ENCODE measurements at regions of chr20 and their contacts with region 1.

Region 1: GRCh38 chr20:49676581-49677291 is 36.9 kb downstream of the B4GALT5 start:
- DNase-seq: peak; percentile 51
- ATAC-seq: peak; percentile 66
- H3K4me3 Mint-ChIP-seq: no peak overlapping the region
- H3K27ac Mint-ChIP-seq: peak overlapping the region; percentile 27
- H3K4me1 Mint-ChIP-seq: peaks cover 59% of the 10 kb centered on the region
- H3K27me3 Mint-ChIP-seq: no peaks in the 10 kb centered on the region

Region 2: DNA sequence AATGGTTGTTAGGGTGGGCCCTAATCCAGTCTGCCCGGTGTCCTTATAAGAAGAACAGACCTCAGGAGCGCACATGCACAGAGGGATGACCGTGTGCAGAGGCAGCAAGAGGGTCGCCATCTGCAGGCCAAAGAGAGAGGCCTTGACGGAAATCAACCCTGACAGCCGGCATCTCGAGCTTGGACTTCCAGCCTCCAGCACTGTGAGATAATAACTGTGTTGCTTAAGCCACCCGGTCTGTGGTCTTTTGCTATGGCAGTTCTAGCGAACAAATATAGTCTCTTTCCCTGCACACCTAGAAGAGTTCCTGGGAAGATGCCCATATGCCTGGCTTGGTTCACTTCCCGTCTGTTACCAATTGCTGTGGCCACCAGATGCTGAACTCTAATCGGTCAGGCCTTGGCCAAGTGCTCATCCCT is 73.5 kb before region 1 on chr20:
- CTCF ChIA-PET with region 1: no interaction called
- POLR2A ChIA-PET with region 1: no interaction called
- intact Hi-C with region 1: no loop called
- DNase-seq: peak; percentile 37
- ATAC-seq: no peak
- H3K4me3 Mint-ChIP-seq: no peak overlapping the region
- H3K27ac Mint-ChIP-seq: no peak overlapping the region
- H3K4me1 Mint-ChIP-seq: peaks cover 3% of the 10 kb centered on the region
- H3K27me3 Mint-ChIP-seq: peaks cover 10% of the 10 kb centered on the region

Region 3: DNA sequence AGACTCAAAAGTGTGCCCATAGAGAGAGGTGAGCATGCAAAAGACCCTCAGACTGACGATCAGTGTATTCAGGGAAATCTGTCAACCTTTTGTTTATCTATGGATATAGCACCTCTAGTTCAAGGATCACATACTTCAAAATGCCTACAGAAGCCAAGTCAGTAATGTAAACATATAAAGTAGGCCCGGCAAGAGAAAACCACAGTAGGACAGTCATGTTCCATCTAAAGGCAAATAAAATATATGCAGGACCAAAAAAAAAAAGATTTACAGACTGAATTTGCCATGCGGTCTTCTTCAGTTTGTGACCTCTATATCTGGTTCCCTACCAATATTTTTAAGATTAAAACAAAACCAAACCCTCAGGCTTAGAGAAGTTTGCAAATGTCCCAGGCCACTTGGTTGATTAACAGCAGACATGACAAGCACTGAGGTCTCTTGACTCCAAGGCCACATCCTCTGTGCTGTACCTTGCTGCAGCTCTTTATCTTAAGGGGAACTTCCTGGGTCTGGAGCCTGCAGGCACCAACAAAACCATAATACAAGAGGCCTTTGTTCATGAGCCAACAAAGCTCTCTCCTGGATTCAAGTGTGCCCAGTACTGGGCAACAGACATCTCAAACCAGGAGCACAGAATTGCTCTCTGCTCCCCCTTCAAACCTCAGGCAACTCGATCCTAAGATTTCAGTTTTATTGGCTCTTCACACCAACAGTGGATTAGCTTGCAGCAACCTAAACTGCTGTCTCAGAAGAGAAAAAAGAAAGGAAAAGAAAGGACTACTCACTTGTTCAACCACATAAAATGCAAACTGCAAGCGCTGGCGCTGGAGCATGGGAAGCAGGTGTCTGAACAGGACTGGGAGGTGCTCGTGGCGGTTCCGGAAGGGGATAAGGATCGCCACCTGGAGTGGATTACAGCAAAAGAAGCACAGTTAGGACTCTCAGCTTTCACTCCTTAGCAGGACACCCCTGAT is 34.8 kb before region 1 on chr20:
- CTCF ChIA-PET with region 1: no interaction called
- POLR2A ChIA-PET with region 1: no interaction called
- intact Hi-C with region 1: no loop called
- DNase-seq: no peak
- ATAC-seq: no peak
- H3K4me3 Mint-ChIP-seq: no peak overlapping the region
- H3K27ac Mint-ChIP-seq: no peak overlapping the region
- H3K4me1 Mint-ChIP-seq: no peaks in the 10 kb centered on the region
- H3K27me3 Mint-ChIP-seq: no peaks in the 10 kb centered on the region

Region 4: GRCh38 chr20:49653925-49654434 is 22.8 kb before region 1 on chr20:
- CTCF ChIA-PET with region 1: no interaction called
- POLR2A ChIA-PET with region 1: no interaction called
- intact Hi-C with region 1: no loop called
- DNase-seq: no peak
- ATAC-seq: no peak
- H3K4me3 Mint-ChIP-seq: no peak overlapping the region
- H3K27ac Mint-ChIP-seq: no peak overlapping the region
- H3K4me1 Mint-ChIP-seq: peaks cover 9% of the 10 kb centered on the region
- H3K27me3 Mint-ChIP-seq: no peaks in the 10 kb centered on the region

Region 5: DNA sequence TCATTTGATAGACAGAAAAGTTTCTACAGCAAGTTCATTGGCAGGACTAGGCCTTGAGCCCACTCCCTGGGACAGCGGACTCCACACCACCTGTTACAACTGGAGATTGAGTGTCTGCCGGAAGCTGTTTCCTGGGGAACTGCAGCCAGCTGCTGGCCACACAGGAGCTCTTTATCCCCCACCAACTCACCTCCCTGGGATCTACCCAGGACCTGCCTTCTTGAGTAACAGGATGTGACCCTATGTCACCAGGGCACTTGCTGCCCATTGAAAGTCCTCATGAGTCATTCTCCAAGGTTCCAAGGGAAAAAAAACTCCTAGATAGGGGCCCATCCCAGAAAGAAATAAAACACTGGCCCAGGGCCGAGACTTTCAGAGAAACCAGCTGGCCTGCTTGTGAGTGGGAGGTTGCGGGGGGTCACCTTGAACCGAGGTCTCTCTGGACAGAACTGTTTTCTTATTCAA is 98.5 kb after region 1 on chr20:
- CTCF ChIA-PET with region 1: no interaction called
- POLR2A ChIA-PET with region 1: no interaction called
- intact Hi-C with region 1: loop called in 1 of 2 experiments (anchors 1 kb)
- DNase-seq: peak; percentile 6
- ATAC-seq: no peak
- H3K4me3 Mint-ChIP-seq: no peak overlapping the region
- H3K27ac Mint-ChIP-seq: no peak overlapping the region
- H3K4me1 Mint-ChIP-seq: peaks cover 20% of the 10 kb centered on the region
- H3K27me3 Mint-ChIP-seq: peaks cover 16% of the 10 kb centered on the region